ENCODE measurements at regions of chr9 and their contacts with region 1.

Region 1: GRCh38 chr9:121267689-121268597 is at the start of gene GSN:
- DNase-seq: peak; percentile 61 to 94 (median 89)

Region 2: DNA sequence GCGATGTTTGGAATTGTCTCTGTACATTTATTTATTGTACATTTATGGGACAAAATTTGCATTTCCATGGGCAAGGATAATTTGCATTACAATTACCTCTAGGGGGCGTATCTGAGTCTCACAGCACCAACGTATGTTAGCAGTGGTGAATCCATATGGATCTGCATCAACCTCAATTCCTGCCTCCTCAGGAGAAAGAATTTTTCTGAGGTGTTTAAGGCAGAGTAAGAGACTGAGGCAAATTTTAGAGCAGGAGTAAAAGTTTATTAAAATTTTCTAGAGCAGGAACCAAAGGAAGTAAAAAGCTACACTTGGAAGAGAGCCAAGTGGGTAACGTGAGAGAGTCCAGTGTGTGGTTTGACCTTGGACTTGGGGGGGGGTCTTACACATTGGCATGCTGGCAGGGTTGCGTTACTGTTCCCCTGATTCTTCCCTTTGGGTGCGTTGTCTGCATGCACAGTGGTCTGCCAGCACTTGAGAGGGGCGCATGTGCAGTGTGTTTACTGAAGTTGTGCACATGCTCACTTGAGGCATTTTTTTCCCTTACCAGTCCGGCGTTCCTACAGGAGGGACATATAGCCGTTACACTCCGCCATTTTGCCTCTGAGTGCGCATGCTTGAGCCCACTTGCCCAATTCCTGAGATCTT is 45.3 kb before region 1 on chr9:
- intact Hi-C with region 1: loop called (anchors 5 kb)
- DNase-seq: peak in 8 of 42 donors; percentile 15 to 54 (median 26)

Measured in head of caudate nucleus (tissue), 42 donors.